ENCODE measurements at regions of chrX and their contacts with region 1.

Region 1: DNA sequence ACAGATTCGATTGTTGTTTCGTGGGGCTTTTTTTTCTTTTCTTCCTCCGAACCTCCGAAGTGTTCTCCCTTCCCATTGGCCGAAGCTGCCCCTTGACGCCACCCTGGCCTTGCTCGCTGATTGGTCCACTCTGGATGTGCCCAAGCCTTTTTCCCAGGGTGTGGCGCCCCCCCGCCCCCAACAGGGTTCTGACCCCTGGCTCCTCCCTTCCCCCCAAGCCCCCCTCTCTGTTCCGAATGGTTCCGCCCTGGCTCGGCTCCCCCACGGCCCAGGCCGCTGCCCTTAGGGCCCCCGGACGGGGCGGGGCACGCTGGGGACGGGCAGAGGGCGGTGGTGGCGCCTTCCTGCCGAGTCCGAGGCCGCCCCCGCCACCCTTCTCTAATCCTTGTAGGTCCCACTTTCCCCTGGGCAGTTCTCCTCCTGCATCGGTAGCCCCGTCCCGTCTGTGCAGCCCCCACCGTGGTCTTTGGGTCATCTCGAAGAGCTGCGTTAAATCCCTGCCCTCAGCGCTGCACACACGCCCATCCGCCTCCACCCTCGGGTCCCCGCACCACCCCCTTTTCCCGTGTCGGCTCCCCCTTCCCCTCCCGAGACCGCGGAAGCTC is 25.5 kb downstream of the UTP14A start:
- DNase-seq: peak; percentile 55
- ATAC-seq: peak; percentile 89
- H3K4me3 ChIP-seq: peak overlapping the region; percentile 67; the same call in 1 of the 2 replicates
- H3K27ac ChIP-seq: peak overlapping the region; percentile 65; the same call in 1 of the 2 replicates
- H3K4me1 ChIP-seq: no peaks in the 10 kb centered on the region
- H3K27me3 ChIP-seq: no peaks in the 10 kb centered on the region
- CTCF ChIP-seq: no peak
- EP300 ChIP-seq: no peak
- POLR2A ChIP-seq: peak; percentile 49; the same call in 1 of the 2 replicates
- RAD21 ChIP-seq: no peak

Region 2: DNA sequence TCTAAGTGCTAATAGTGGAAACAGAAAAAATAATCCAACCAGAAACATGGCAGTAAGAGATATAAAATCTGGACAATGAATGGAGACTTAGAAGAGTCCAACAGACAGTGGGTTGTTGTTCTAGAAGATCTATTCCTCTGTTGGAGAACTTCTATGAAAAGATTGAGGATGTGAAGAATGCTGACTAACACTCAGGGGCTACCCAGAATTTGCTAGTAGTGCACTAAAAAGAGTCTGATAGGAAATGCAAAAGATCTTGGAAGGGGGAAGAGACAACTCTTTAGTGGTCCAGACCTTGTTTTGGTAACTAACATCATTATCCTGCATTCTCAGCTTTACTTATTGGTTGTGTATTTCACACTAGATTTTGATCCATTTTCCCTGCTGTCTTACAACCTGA is 486.1 kb before region 1 on chrX:
- CTCF ChIA-PET with region 1: no interaction called
- POLR2A ChIA-PET with region 1: no interaction called
- RAD21 ChIA-PET with region 1: no interaction called
- SMC1A ChIA-PET with region 1: no interaction called
- in situ Hi-C with region 1: no loop called
- intact Hi-C with region 1: no loop called
- DNase-seq: no peak
- ATAC-seq: no peak
- H3K4me3 ChIP-seq: no peak overlapping the region
- H3K27ac ChIP-seq: no peak overlapping the region
- H3K4me1 ChIP-seq: no peaks in the 10 kb centered on the region
- H3K27me3 ChIP-seq: no peaks in the 10 kb centered on the region
- CTCF ChIP-seq: no peak
- EP300 ChIP-seq: no peak
- POLR2A ChIP-seq: no peak
- RAD21 ChIP-seq: no peak

Region 3: DNA sequence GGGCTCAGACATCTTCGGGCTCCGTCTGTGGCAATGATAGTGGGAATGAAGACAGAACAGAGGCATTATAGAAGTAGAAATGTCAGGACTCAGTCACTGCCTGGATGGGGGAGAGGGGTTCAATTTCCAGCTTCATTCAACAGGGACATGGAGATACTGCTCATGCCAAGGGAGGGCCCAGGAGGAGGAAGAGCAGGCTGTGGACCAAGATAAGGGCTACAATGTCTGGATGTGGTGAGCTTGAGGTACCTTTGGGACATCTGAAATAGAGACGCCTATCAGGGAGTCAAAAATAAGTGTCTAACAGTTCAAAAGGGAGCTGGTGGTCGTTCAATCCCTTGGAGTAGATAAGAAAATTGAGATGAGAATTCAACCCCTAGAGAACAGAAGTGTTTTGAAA is 144.3 kb after region 1 on chrX:
- CTCF ChIA-PET with region 1: no interaction called
- POLR2A ChIA-PET with region 1: no interaction called
- RAD21 ChIA-PET with region 1: no interaction called
- SMC1A ChIA-PET with region 1: no interaction called
- in situ Hi-C with region 1: no loop called
- intact Hi-C with region 1: no loop called
- DNase-seq: no peak
- ATAC-seq: no peak
- H3K4me3 ChIP-seq: no peak overlapping the region
- H3K27ac ChIP-seq: no peak overlapping the region
- H3K4me1 ChIP-seq: no peaks in the 10 kb centered on the region
- H3K27me3 ChIP-seq: no peaks in the 10 kb centered on the region; a peak in 1 of 4 replicates
- CTCF ChIP-seq: no peak
- EP300 ChIP-seq: no peak
- POLR2A ChIP-seq: no peak
- RAD21 ChIP-seq: no peak

Region 4: GRCh38 chrX:130165703-130166502 is 234.4 kb after region 1 on chrX and contains the start of gene AIFM1:
- CTCF ChIA-PET with region 1: no interaction called
- POLR2A ChIA-PET with region 1: no interaction called
- RAD21 ChIA-PET with region 1: no interaction called
- SMC1A ChIA-PET with region 1: no interaction called
- in situ Hi-C with region 1: no loop called
- intact Hi-C with region 1: loop called (anchors 10 kb)
- DNase-seq: peak; percentile 91
- ATAC-seq: peak; percentile 93
- H3K4me3 ChIP-seq: peak within 1 kb of the TSS; percentile 69
- H3K27ac ChIP-seq: peak within 1 kb of the TSS; percentile 70
- H3K4me1 ChIP-seq: peaks cover 4% of the 10 kb centered on the region; the same call in 1 of the 2 replicates
- H3K27me3 ChIP-seq: no peaks in the 10 kb centered on the region
- CTCF ChIP-seq: no peak
- EP300 ChIP-seq: no peak
- POLR2A ChIP-seq: peak; percentile 84
- RAD21 ChIP-seq: no peak
- polyA plus RNA-seq, gene AIFM1: 44.2 to 78.0 TPM

Measured in GM12878 (cell line).